ACHN (cell line): ENCODE measurements at regions of chr1 and their contacts with region 1.

Region 1: GRCh38 chr1:225474986-225475820 is 47.4 kb upstream of the LBR start:
- DNase-seq: peak; percentile 59

Region 2: GRCh38 chr1:225777583-225778336 is 302.6 kb after region 1 on chr1 and contains the start of gene SRP9:
- in situ Hi-C with region 1: loop called (anchors 25 kb)
- DNase-seq: peak; percentile 100

Region 3: GRCh38 chr1:225999227-225999911 is 524.2 kb after region 1 on chr1 and contains the start of gene SDE2:
- in situ Hi-C with region 1: loop called (anchors 25 kb)
- DNase-seq: peak; percentile 99